A549 (cell line): ENCODE measurements at regions of chr16 and their contacts with region 1.

Region 1: DNA sequence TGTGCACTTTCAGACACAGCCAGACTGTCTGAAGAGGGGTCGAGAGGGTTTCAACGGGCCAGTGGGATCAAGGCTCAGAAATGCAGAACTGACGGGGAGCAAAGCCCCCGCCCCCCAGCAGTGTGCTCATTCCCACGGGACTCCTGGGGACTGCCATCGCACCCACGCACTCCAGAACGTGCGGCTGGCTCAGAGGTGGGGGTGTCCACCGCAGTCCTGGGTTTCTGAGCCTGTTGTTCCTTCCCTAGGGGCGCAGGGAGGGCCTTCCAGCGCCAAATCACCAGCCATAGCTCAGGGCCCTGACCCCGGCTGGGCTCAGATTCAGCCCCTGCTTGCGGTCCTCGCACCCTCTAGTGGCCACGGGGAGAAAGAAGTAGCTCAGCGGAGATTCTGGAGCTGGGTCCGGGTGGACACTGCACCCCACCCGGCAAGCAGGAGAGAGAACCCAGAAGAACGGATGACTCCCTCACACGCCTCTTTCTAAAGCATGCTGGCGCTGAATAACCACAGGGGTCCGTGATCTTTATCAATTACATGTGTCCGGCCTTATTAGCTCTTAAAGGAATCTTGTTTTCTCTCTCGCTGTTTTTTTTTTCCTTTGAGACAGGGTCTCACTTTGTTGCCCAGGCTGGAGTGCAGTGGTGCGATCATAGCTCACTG is 45.0 kb upstream of the USP7 start:
- DNase-seq: peak; percentile 74 to 97
- ATAC-seq: peak; percentile 100
- H3K4me3 ChIP-seq: no peak overlapping the region
- H3K27ac ChIP-seq: peak overlapping the region; percentile 59 to 79
- H3K4me1 ChIP-seq: peaks cover 3% of the 10 kb centered on the region; the same call in 1 of the 3 replicates
- CTCF ChIP-seq: peak; percentile 83
- EP300 ChIP-seq: no peak
- POLR2A ChIP-seq: no peak
- RAD21 ChIP-seq: peak; percentile 87

Region 2: GRCh38 chr16:8899709-8900317 is 108.9 kb before region 1 on chr16:
- CTCF ChIA-PET with region 1: interaction called, 20 read pairs
- POLR2A ChIA-PET with region 1: no interaction called
- DNase-seq: no peak
- ATAC-seq: peak in 1 of 2 experiments; percentile 56; a peak in 2 of 6 replicates
- H3K4me3 ChIP-seq: no peak overlapping the region
- H3K27ac ChIP-seq: no peak overlapping the region
- H3K4me1 ChIP-seq: no peaks in the 10 kb centered on the region
- CTCF ChIP-seq: no peak
- EP300 ChIP-seq: no peak
- POLR2A ChIP-seq: no peak
- RAD21 ChIP-seq: no peak; a peak in 1 of 5 replicates

Region 3: GRCh38 chr16:8936421-8936820 is 72.3 kb before region 1 on chr16:
- CTCF ChIA-PET with region 1: interaction called, 17 read pairs
- POLR2A ChIA-PET with region 1: no interaction called
- DNase-seq: peak; percentile 56 to 69
- ATAC-seq: peak; percentile 96 to 98
- H3K4me3 ChIP-seq: no peak overlapping the region
- H3K27ac ChIP-seq: no peak overlapping the region
- H3K4me1 ChIP-seq: peaks cover 11% of the 10 kb centered on the region; the same call in 2 of the 3 replicates
- CTCF ChIP-seq: peak; percentile 39
- EP300 ChIP-seq: no peak
- POLR2A ChIP-seq: no peak
- RAD21 ChIP-seq: peak in 1 of 2 experiments; percentile 38; a peak in 3 of 5 replicates

Region 4: GRCh38 chr16:8989099-8989878 is 19.4 kb before region 1 on chr16:
- CTCF ChIA-PET with region 1: interaction called, 73 read pairs
- POLR2A ChIA-PET with region 1: no interaction called
- DNase-seq: no peak
- ATAC-seq: peak in 1 of 2 experiments; percentile 16; a peak in 2 of 6 replicates
- H3K4me3 ChIP-seq: no peak overlapping the region
- H3K27ac ChIP-seq: peak overlapping the region in 1 of 2 experiments; percentile 56; a peak in 2 of 6 replicates
- H3K4me1 ChIP-seq: peaks cover 29% of the 10 kb centered on the region
- CTCF ChIP-seq: no peak
- EP300 ChIP-seq: no peak
- POLR2A ChIP-seq: no peak
- RAD21 ChIP-seq: no peak

Region 5: DNA sequence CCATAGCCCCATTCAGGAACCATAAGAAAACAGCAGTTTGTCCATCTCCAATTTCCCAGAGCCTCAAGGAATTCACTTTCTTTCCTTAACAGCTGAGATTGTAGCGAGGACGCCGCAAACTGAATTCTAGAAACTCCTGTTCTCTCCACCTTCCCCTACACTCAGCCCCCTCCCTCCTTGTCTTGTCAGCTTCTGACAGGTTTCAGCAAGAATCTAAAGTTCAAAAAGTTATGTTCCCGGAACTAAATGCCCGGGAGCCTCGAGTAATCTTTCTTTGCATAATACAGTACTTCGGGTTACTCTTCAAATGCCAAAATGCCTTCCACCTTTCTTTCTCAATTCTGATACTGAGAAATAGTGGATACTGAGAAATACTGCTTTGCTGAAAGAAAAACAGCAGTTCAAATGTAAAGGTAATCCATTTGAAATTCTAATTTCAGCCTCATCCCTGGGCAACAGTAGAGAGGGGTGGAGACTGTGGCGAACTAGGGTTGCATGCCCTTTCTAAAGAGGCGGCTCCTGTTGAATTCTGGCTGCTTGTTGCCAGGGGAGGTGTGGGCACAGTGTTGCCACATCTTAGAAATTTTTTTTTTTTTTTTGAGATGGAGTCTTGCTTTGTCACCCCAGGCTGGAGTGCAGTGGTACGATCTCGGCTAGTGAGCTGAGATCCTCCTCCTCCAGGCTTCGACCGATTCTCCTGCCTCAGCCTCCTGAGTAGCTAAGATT is 18.5 kb after region 1 on chr16:
- CTCF ChIA-PET with region 1: interaction called, 16 read pairs
- POLR2A ChIA-PET with region 1: no interaction called
- DNase-seq: no peak
- ATAC-seq: no peak
- H3K4me3 ChIP-seq: no peak overlapping the region
- H3K27ac ChIP-seq: no peak overlapping the region
- H3K4me1 ChIP-seq: no peaks in the 10 kb centered on the region
- CTCF ChIP-seq: no peak
- EP300 ChIP-seq: no peak
- POLR2A ChIP-seq: no peak
- RAD21 ChIP-seq: no peak

Region 6: DNA sequence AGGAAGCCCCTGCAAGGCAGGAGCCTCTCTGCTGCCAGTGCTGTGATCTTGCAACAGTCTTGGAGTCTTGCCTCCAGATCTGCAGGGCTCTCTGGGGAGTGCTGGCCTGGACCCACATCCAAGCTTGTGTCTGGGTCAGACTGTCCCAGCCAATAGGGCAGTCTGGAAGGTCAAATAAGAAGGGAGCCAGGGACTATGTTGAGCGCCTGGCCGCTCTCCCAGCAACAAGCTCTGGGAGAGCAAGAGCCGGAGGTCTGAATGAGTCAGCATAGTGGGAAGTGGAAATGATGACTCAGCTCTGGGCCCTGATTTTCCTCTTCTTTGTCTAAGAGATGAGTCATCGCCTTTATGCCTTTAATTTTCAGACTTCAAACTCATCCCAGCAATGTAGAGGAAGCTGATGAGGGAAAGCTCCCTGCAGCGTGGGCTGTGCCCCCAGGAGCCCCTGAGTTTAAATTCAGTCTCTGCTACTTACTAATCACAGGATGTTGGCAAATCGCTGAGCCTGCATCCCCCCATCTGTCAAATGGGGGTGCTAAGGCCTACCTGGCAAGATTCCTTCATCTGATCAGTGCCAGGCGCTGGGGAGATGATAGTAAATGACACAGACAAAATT is 39.1 kb after region 1 on chr16:
- CTCF ChIA-PET with region 1: interaction called, 17 read pairs
- POLR2A ChIA-PET with region 1: interaction called, 5 read pairs
- DNase-seq: peak; percentile 79 to 98
- ATAC-seq: peak; percentile 98
- H3K4me3 ChIP-seq: no peak overlapping the region
- H3K27ac ChIP-seq: peak overlapping the region; percentile 83 to 86
- H3K4me1 ChIP-seq: peaks cover 38% of the 10 kb centered on the region
- CTCF ChIP-seq: no peak
- EP300 ChIP-seq: peak; percentile 76 to 85; a peak in 3 of 5 replicates
- POLR2A ChIP-seq: no peak
- RAD21 ChIP-seq: peak in 1 of 2 experiments; percentile 43; a peak in 1 of 5 replicates

Region 7: DNA sequence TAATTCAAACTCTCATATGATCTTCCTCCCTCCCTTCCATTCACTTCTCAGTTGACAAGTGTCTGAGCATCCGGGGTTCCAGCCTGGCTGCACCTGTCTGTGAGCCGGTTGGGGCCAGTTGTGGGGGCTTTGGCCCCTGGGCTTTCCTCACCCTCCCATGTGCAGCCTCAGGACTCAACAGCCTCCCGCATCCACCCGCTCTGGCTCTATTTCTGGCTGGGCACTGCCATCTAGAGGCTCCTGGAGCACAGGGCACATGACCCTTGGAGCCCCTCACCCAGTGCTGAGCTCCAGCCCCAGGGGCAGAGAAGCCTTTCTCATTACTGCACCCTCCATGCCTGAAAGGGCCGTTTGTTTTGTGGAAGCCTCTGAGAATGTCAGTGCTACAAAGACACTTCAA is 126.0 kb after region 1 on chr16:
- CTCF ChIA-PET with region 1: interaction called, 21 read pairs
- POLR2A ChIA-PET with region 1: interaction called, 3 read pairs
- DNase-seq: peak; percentile 67 to 69
- ATAC-seq: peak; percentile 85 to 90
- H3K4me3 ChIP-seq: no peak overlapping the region
- H3K27ac ChIP-seq: peak overlapping the region in 1 of 2 experiments; percentile 61; a peak in 3 of 6 replicates
- H3K4me1 ChIP-seq: peaks cover 8% of the 10 kb centered on the region; the same call in 1 of the 3 replicates
- CTCF ChIP-seq: peak; percentile 77
- EP300 ChIP-seq: no peak
- POLR2A ChIP-seq: no peak
- RAD21 ChIP-seq: peak; percentile 88 to 91